BJ (cell line): ENCODE measurements at regions of chr12 and their contacts with region 1.

Region 1: DNA sequence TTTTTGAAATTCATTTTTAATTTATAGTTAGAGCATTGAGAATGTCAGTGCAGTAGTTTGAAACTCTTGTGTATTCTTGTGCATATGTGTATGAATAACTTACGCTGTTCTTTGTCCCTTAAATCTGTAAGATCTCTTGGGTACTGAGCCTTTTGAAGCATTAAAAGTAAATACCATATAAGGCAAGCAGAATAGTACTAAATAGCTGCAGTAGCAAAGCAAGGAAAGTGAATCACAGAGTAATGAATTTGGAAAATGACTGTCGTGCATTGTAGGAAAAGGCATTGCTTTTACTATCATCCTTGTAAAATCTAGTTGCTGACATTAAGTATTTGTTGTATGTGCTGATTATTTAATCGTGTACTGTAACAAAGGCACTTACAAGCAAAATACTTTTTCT is 12.1 kb downstream of the CNOT2 start:
- DNase-seq: no peak
- H3K4me3 ChIP-seq: no peak overlapping the region
- H3K27me3 ChIP-seq: no peaks in the 10 kb centered on the region
- CTCF ChIP-seq: no peak

Region 2: DNA sequence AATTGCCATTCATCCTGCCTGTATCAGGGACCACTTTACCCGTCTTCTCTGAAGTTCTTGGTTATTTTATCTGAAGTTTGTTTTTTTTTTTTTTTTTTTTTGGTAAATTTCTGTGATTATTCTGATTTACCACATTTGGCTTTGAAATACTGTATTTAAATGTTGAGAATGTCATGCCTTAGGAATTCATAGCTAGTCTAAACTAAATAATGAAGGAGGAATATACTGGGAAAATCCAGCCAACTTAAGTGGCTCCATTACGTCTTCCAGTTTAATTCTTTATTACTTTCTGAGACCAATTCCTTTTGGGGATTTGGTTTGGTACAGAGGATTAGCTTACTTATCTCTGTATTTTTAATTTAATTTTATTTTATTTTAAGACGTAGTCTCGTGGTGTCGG is 50.5 kb after region 1 on chr12:
- CTCF ChIA-PET with region 1: no interaction called
- POLR2A ChIA-PET with region 1: interaction called, 27 read pairs
- DNase-seq: no peak
- H3K4me3 ChIP-seq: no peak overlapping the region
- H3K27me3 ChIP-seq: no peaks in the 10 kb centered on the region
- CTCF ChIP-seq: no peak

Region 3: DNA sequence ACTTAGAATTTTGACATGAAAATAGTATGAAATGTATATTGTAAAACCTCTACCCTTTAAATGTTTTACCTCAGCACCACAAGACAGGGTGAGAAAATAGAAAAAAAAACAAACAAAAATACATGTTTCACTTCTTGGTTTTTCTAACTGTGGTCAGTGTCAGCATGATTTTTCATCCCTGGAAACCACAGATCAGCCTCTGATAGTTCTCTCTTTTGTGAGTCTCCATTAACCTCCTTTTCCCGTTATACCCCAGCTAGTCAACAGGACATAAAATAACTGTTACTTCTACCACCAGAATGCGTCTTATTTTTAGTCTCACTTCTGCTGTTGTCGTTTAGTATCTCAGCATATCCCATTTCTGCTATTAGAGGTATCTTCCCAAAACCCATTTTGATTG is 62.5 kb after region 1 on chr12:
- CTCF ChIA-PET with region 1: no interaction called
- POLR2A ChIA-PET with region 1: no interaction called
- DNase-seq: no peak
- H3K4me3 ChIP-seq: no peak overlapping the region
- H3K27me3 ChIP-seq: no peaks in the 10 kb centered on the region
- CTCF ChIP-seq: no peak